Posterior vena cava (tissue), 2 donors: ENCODE measurements at regions of chr2 and their contacts with region 1.

Region 1: DNA sequence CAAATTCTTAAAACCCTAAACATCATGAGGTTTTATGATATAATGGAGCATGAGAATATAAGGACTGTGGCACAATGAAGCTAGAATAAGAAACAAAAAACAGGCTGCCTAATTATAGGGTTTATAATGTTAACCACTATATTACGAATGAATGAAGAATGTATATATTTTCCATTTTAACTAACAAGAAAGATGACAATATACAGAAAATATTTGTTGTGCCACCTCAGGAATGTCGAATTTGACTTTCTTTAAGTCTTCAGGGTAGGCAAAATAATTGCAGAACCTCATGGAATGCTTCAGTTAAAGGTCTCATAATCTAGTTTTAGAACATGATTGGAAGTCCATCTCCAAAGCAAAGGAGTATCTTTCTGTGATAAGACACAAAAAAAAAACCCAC is 282.9 kb upstream of the SLC8A1 start:
- DNase-seq: no peak

Region 2: DNA sequence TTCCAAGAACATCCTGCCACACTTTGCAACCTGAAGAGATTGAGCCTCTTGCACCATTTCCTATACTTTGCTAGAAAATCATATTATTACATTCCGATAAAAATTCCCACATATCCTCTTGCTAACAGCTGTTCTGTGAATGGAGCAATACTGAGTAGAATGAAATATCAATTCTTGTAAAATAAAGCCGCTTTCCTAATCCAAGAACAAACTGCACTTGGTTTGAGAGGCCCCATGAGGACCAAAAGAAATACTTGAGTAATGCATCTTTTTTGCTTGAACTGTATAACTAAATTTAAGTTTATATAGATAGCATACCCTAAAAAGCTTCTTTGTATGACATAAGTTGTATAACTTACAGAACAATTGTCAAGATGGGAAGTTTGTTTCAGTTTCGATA is 349.5 kb after region 1 on chr2:
- intact Hi-C with region 1: loop called in 1 of 2 experiments (anchors 5 kb)
- DNase-seq: no peak

Region 3: GRCh38 chr2:42296226-42296625 is 1561.4 kb after region 1 on chr2:
- intact Hi-C with region 1: loop called in 1 of 2 experiments (anchors 5 kb)
- DNase-seq: no peak